CD4-positive, alpha-beta T cell (primary cell): ENCODE measurements at regions of chr12 and their contacts with region 1.

Region 1: GRCh38 chr12:122951979-122952892 is 14.0 kb downstream of the ABCB9 start:
- DNase-seq: peak; percentile 62 to 87 (median 70)
- ATAC-seq: peak; percentile 99
- H3K4me3 ChIP-seq: no peak overlapping the region
- H3K4me3 Mint-ChIP-seq: no peak overlapping the region
- H3K27ac ChIP-seq: no peak overlapping the region
- H3K27ac Mint-ChIP-seq: no peak overlapping the region
- H3K4me1 ChIP-seq: peaks cover 6% of the 10 kb centered on the region
- H3K4me1 Mint-ChIP-seq: peaks cover 6% of the 10 kb centered on the region
- H3K27me3 ChIP-seq: no peaks in the 10 kb centered on the region
- H3K27me3 Mint-ChIP-seq: no peaks in the 10 kb centered on the region
- CTCF ChIP-seq: peak; percentile 83

Region 2: GRCh38 chr12:122635471-122635870 is 316.8 kb before region 1 on chr12:
- CTCF ChIA-PET with region 1: no interaction called
- POLR2A ChIA-PET with region 1: no interaction called
- intact Hi-C with region 1: loop called in 1 of 2 experiments (anchors 10 kb)
- DNase-seq: no peak
- ATAC-seq: no peak
- H3K4me3 ChIP-seq: no peak overlapping the region
- H3K4me3 Mint-ChIP-seq: no peak overlapping the region
- H3K27ac ChIP-seq: no peak overlapping the region
- H3K27ac Mint-ChIP-seq: no peak overlapping the region
- H3K4me1 ChIP-seq: no peaks in the 10 kb centered on the region
- H3K4me1 Mint-ChIP-seq: no peaks in the 10 kb centered on the region
- H3K27me3 ChIP-seq: no peaks in the 10 kb centered on the region
- H3K27me3 Mint-ChIP-seq: no peaks in the 10 kb centered on the region
- CTCF ChIP-seq: no peak

Region 3: DNA sequence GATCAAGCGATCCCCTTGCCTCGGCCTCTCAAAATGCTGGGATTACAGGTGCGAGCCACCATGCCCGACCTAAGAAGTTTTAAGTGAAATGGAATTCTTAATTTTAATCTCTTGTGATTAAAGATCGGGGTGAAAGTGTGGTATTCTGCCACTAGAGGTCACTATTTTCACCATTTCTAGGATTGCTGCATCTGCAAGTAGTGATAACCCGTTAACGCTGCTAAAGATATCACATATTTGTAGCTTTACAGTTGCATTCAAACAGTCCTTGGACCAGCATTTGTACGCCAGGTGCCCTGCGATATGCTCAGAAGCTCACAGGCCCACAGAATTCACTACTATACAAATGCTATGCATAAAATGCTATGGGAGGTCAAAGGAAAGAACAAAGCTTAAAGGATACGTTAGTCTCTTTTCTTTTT is 158.5 kb before region 1 on chr12:
- CTCF ChIA-PET with region 1: interaction called, 16 read pairs
- POLR2A ChIA-PET with region 1: interaction called, 3 read pairs
- intact Hi-C with region 1: loop called (anchors 1 kb)
- DNase-seq: peak in 5 of 14 experiments; percentile 18 to 76 (median 66)
- ATAC-seq: peak; percentile 87
- H3K4me3 ChIP-seq: no peak overlapping the region
- H3K4me3 Mint-ChIP-seq: no peak overlapping the region
- H3K27ac ChIP-seq: no peak overlapping the region
- H3K27ac Mint-ChIP-seq: no peak overlapping the region
- H3K4me1 ChIP-seq: peaks cover 7% of the 10 kb centered on the region
- H3K4me1 Mint-ChIP-seq: no peaks in the 10 kb centered on the region
- H3K27me3 ChIP-seq: no peaks in the 10 kb centered on the region
- H3K27me3 Mint-ChIP-seq: no peaks in the 10 kb centered on the region
- CTCF ChIP-seq: peak; percentile 88

Region 4: DNA sequence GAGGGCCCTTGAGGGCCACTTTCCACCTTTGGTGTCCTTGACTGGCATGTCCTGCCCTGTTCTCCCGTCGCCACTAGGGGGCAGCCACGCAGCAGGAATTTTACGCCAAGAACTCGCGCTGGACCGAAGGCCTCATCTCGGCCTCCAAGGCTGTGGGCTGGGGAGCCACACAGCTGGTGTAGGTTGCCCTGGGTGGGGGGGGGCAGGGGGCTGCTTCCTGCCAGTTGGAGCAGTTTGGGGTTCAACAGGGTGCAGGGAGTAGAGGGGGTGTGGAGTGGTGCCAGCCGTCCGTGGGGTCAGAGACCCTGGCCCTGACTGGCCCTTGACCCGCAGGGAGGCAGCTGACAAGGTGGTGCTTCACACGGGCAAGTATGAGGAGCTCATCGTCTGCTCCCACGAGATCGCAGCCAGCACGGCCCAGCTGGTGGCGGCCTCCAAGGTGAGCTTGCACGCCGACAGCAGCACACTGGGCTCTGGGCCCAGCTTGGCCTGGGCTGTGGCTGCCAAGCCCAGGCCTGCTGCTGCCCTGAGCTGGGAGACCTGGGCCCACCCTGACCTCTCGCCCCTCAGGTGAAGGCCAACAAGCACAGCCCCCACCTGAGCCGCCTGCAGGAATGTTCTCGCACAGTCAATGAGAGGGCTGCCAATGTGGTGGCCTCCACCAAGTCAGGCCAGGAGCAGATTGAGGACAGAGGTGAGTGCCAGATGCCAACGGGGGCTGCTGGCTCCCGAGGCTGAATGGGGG is 91.7 kb before region 1 on chr12:
- CTCF ChIA-PET with region 1: interaction called, 20 read pairs
- POLR2A ChIA-PET with region 1: interaction called, 5 read pairs
- intact Hi-C with region 1: loop called (anchors 1 kb)
- DNase-seq: peak; percentile 72 to 89 (median 79)
- ATAC-seq: peak; percentile 52
- H3K4me3 ChIP-seq: no peak overlapping the region
- H3K4me3 Mint-ChIP-seq: no peak overlapping the region
- H3K27ac ChIP-seq: no peak overlapping the region
- H3K27ac Mint-ChIP-seq: peak overlapping the region; percentile 61
- H3K4me1 ChIP-seq: peaks cover 9% of the 10 kb centered on the region
- H3K4me1 Mint-ChIP-seq: no peaks in the 10 kb centered on the region
- H3K27me3 ChIP-seq: no peaks in the 10 kb centered on the region
- H3K27me3 Mint-ChIP-seq: no peaks in the 10 kb centered on the region
- CTCF ChIP-seq: peak; percentile 78

Region 5: GRCh38 chr12:122965851-122966722 is 13.9 kb after region 1 on chr12 and contains the start of gene ABCB9:
- CTCF ChIA-PET with region 1: no interaction called
- POLR2A ChIA-PET with region 1: no interaction called
- intact Hi-C with region 1: no loop called
- DNase-seq: peak; percentile 91 to 99 (median 95)
- ATAC-seq: peak; percentile 97
- H3K4me3 ChIP-seq: peak within 1 kb of the TSS; percentile 78
- H3K4me3 Mint-ChIP-seq: peak within 1 kb of the TSS; percentile 81
- H3K27ac ChIP-seq: peak within 1 kb of the TSS; percentile 31 to 44
- H3K27ac Mint-ChIP-seq: peak within 1 kb of the TSS; percentile 14
- H3K4me1 ChIP-seq: peaks cover 28% of the 10 kb centered on the region
- H3K4me1 Mint-ChIP-seq: peaks cover 5% of the 10 kb centered on the region
- H3K27me3 ChIP-seq: no peaks in the 10 kb centered on the region
- H3K27me3 Mint-ChIP-seq: no peaks in the 10 kb centered on the region
- CTCF ChIP-seq: no peak
- total RNA-seq, gene ABCB9: 5.4 to 6.2 TPM

Region 6: DNA sequence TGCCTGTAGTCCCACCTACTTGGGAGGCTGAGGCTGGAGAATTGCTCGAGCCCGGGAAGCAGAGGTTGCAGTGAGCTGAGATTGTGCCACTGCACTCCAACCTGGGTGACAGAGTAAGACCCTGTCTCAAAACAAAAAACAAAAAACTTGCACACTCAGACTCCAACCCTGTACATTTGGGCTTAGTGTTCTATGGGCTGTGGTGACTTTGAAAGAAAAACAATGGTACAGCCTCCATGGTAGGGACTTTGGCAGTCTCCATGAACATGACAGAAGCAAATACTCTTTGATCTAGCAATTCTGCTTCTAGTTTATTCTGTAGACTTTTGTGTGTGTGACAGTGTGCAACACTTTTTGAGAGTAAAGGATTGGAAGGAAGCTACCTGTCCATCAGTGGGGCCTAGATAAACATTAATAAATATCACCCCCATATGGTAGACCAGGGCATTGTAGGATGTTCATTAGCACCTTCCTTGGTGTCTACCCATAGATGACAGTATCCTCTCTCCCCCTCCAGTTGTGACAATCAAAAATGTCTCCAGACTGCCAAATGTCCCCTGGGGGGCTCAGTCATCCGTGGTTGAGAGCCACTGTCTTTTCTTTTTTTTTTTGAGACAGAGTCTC is 516.4 kb after region 1 on chr12:
- CTCF ChIA-PET with region 1: no interaction called
- POLR2A ChIA-PET with region 1: no interaction called
- intact Hi-C with region 1: no loop called
- DNase-seq: peak in 3 of 14 experiments; percentile 54 to 65 (median 56)
- ATAC-seq: peak; percentile 74
- H3K4me3 ChIP-seq: no peak overlapping the region
- H3K4me3 Mint-ChIP-seq: no peak overlapping the region
- H3K27ac ChIP-seq: no peak overlapping the region
- H3K27ac Mint-ChIP-seq: no peak overlapping the region
- H3K4me1 ChIP-seq: peaks cover 4% of the 10 kb centered on the region
- H3K4me1 Mint-ChIP-seq: peaks cover 10% of the 10 kb centered on the region
- H3K27me3 ChIP-seq: no peaks in the 10 kb centered on the region
- H3K27me3 Mint-ChIP-seq: no peaks in the 10 kb centered on the region
- CTCF ChIP-seq: peak; percentile 34